ENCODE measurements at regions of chr12 and their contacts with region 1.

Region 1: DNA sequence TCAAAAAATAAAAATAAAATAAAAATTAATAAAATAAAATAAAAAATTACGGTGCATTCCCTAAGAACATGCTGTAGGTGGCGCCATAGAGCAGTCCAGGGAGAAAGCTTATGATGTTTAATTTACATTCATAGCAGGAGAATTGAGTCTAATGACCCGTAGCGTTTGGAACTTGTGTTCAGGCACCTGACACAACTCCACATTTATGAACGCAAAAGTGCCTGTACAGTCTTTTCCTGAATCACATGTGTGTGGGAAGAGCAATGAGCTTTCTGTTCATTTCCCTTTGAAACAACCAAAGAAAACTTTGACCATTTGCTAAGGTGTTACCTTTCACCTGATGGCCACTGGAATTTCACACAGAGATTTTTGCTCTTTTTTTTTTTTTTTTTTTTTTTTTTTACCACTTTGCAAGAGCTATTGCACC is 60.6 kb upstream of the KCNA1 start:
- DNase-seq: no peak
- ATAC-seq: no peak; the same call in 2 of the 3 replicates
- H3K4me3 ChIP-seq: no peak overlapping the region
- H3K27ac ChIP-seq: no peak overlapping the region
- H3K4me1 ChIP-seq: no peaks in the 10 kb centered on the region
- H3K27me3 ChIP-seq: no peaks in the 10 kb centered on the region
- CTCF ChIP-seq: peak; percentile 48 to 67 (median 60)
- EP300 ChIP-seq: no peak
- POLR2A ChIP-seq: no peak
- RAD21 ChIP-seq: peak; percentile 56

Region 2: DNA sequence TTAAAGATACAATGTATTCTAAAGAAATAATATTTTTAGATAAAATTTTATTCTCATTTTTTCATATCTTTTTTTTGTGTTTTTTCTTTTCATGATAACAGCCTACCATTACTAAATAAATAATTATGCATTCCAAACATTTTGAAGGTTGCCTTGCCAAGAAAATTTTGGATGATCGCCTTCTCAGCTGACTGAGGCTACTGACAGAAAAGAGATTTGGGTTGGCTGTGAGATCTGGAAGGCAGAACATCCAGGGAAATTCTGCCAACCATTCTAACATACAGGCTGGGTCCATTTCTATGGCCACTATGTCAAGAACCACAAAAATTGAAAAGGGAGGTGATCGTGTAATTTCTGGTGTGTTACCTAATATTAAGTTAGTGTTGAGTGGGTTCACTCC is 80.8 kb before region 1 on chr12:
- CTCF ChIA-PET with region 1: no interaction called
- POLR2A ChIA-PET with region 1: no interaction called
- RAD21 ChIA-PET with region 1: no interaction called
- SMC1A ChIA-PET with region 1: no interaction called
- in situ Hi-C with region 1: no loop called
- intact Hi-C with region 1: no loop called
- DNase-seq: no peak
- ATAC-seq: no peak
- H3K4me3 ChIP-seq: no peak overlapping the region
- H3K27ac ChIP-seq: no peak overlapping the region
- H3K4me1 ChIP-seq: no peaks in the 10 kb centered on the region
- H3K27me3 ChIP-seq: no peaks in the 10 kb centered on the region
- CTCF ChIP-seq: no peak
- EP300 ChIP-seq: no peak
- POLR2A ChIP-seq: no peak
- RAD21 ChIP-seq: no peak

Region 3: GRCh38 chr12:4780641-4781625 is 68.2 kb before region 1 on chr12:
- CTCF ChIA-PET with region 1: no interaction called
- POLR2A ChIA-PET with region 1: no interaction called
- RAD21 ChIA-PET with region 1: no interaction called
- SMC1A ChIA-PET with region 1: no interaction called
- in situ Hi-C with region 1: no loop called
- intact Hi-C with region 1: no loop called
- DNase-seq: no peak
- ATAC-seq: no peak
- H3K4me3 ChIP-seq: no peak overlapping the region
- H3K27ac ChIP-seq: no peak overlapping the region
- H3K4me1 ChIP-seq: no peaks in the 10 kb centered on the region
- H3K27me3 ChIP-seq: peaks cover 4 to 5% of the 10 kb centered on the region in 2 experiments
- CTCF ChIP-seq: no peak
- EP300 ChIP-seq: no peak
- POLR2A ChIP-seq: no peak
- RAD21 ChIP-seq: no peak

Region 4: DNA sequence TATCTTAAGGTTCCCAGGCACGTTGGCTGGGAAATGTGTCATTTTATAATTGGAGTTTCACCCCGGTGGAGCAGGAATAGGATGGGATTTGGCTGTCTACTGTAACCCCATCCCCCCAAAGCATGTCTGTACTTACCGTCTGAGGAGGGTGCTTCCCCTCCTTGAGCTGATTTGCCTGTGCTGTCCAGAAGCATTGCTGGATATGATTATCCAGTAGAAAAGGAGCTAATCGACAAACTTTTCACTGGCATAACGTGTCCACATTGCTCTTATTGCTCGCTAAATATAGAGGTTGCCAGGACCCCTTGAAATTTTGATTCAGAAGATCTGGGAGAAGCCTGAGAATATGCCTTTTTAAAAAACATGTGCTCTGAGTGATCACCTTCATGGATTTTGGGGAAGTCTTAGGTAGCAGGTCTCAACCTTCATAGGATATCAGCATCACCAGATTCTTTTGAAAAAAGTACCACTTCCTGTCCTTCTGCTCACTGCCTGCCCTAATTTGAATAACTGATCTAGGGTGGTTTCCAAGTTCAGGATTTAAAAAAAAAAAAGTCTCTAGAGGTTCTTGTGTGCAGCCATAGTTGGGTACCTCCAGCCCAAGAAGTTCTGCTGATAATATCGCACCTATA is 19.9 kb before region 1 on chr12:
- CTCF ChIA-PET with region 1: interaction called, 11 read pairs
- POLR2A ChIA-PET with region 1: no interaction called
- RAD21 ChIA-PET with region 1: no interaction called
- SMC1A ChIA-PET with region 1: interaction called, 3 read pairs
- in situ Hi-C with region 1: no loop called
- intact Hi-C with region 1: no loop called
- DNase-seq: peak; percentile 73
- ATAC-seq: peak; percentile 89
- H3K4me3 ChIP-seq: peak overlapping the region; percentile 58
- H3K27ac ChIP-seq: peak overlapping the region; percentile 97
- H3K4me1 ChIP-seq: peaks cover 27% of the 10 kb centered on the region
- H3K27me3 ChIP-seq: no peaks in the 10 kb centered on the region
- CTCF ChIP-seq: no peak
- EP300 ChIP-seq: peak; percentile 30 to 66; a peak in 2 of 4 replicates
- POLR2A ChIP-seq: no peak; the same call in 1 of the 2 replicates
- RAD21 ChIP-seq: no peak

Region 5: GRCh38 chr12:5013266-5013730 is 164.2 kb after region 1 on chr12:
- CTCF ChIA-PET with region 1: interaction called, 10 read pairs
- POLR2A ChIA-PET with region 1: no interaction called
- RAD21 ChIA-PET with region 1: no interaction called
- SMC1A ChIA-PET with region 1: no interaction called
- in situ Hi-C with region 1: no loop called
- intact Hi-C with region 1: no loop called
- DNase-seq: no peak
- ATAC-seq: no peak
- H3K4me3 ChIP-seq: no peak overlapping the region
- H3K27ac ChIP-seq: no peak overlapping the region
- H3K4me1 ChIP-seq: peaks cover 4% of the 10 kb centered on the region; the same call in 1 of the 2 replicates
- H3K27me3 ChIP-seq: peaks cover 0 to 1% of the 10 kb centered on the region in 2 experiments; a peak in 1 of 4 replicates
- CTCF ChIP-seq: no peak
- EP300 ChIP-seq: no peak
- POLR2A ChIP-seq: no peak
- RAD21 ChIP-seq: no peak

Measured in GM12878 (cell line).